ENCODE measurements at regions of chr6 and their contacts with region 1.

Region 1: GRCh38 chr6:43263314-43264178 is 20.3 kb downstream of the TTBK1 start:
- DNase-seq: peak; percentile 49 to 90
- H3K4me3 ChIP-seq: no peak overlapping the region
- H3K27ac ChIP-seq: no peak overlapping the region
- H3K4me1 ChIP-seq: peaks cover 0 to 15% (median 5%) of the 10 kb centered on the region in 4 experiments; a peak in 6 of 7 replicates
- H3K27me3 ChIP-seq: peaks cover 2 to 9% (median 7%) of the 10 kb centered on the region in 4 experiments
- CTCF ChIP-seq: peak in 2 of 3 experiments; percentile 91 to 98; a peak in 3 of 4 replicates
- EP300 ChIP-seq: no peak
- POLR2A ChIP-seq: no peak
- RAD21 ChIP-seq: peak; percentile 96 to 97

Region 2: GRCh38 chr6:43150051-43150751 is 113.3 kb before region 1 on chr6:
- CTCF ChIA-PET with region 1: no interaction called
- POLR2A ChIA-PET with region 1: no interaction called
- DNase-seq: no peak
- H3K4me3 ChIP-seq: no peak overlapping the region
- H3K27ac ChIP-seq: no peak overlapping the region
- H3K4me1 ChIP-seq: no peaks in the 10 kb centered on the region
- H3K27me3 ChIP-seq: no peaks in the 10 kb centered on the region
- CTCF ChIP-seq: no peak
- EP300 ChIP-seq: no peak
- POLR2A ChIP-seq: no peak
- RAD21 ChIP-seq: no peak

Region 3: GRCh38 chr6:43274916-43275597 is 11.5 kb after region 1 on chr6:
- CTCF ChIA-PET with region 1: interaction called, 20 read pairs
- POLR2A ChIA-PET with region 1: interaction called, 5 read pairs
- DNase-seq: no peak
- H3K4me3 ChIP-seq: peak overlapping the region; percentile 28 to 66 (median 46)
- H3K27ac ChIP-seq: no peak overlapping the region
- H3K4me1 ChIP-seq: peaks cover 4 to 34% (median 26%) of the 10 kb centered on the region in 4 experiments
- H3K27me3 ChIP-seq: peaks cover 12 to 48% (median 37%) of the 10 kb centered on the region in 4 experiments
- CTCF ChIP-seq: no peak
- EP300 ChIP-seq: no peak
- POLR2A ChIP-seq: no peak
- RAD21 ChIP-seq: no peak

Region 4: DNA sequence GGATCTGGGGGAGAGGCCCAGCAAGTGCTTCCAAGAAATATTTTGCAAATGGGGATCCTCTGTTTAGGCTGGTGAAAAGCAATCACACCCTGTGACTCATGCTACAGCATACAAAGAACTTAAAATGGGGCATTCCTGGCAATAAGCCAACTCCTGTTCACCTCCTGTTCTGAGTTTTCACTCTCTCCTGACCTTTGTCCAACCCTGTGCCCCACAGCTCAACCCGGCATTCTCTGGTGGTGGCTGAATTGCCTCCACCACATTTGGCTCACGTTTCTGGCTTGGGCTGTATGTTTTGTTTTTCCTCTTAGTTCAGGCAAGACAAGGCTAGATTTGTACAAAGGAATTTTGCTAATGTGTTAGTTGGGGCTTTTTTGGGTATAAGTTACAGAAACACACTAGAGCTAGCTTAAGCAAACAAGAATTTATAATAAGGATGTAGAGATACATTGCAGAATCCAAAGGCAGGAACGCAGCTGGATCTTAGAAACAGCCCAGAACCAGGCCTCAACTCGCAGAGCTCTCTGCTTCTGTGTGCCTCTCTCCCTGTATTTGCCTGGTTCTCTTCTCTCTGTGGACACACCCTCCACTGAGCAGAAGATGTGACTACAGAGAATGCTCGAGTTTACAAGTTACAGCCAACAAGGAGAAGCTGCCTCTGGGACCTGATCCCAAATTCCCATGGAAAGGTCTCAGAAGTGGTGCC is 173.2 kb after region 1 on chr6:
- CTCF ChIA-PET with region 1: no interaction called
- POLR2A ChIA-PET with region 1: no interaction called
- DNase-seq: no peak
- H3K4me3 ChIP-seq: no peak overlapping the region
- H3K27ac ChIP-seq: no peak overlapping the region
- H3K4me1 ChIP-seq: no peaks in the 10 kb centered on the region; a peak in 2 of 7 replicates
- H3K27me3 ChIP-seq: no peaks in the 10 kb centered on the region
- CTCF ChIP-seq: no peak
- EP300 ChIP-seq: no peak
- POLR2A ChIP-seq: no peak
- RAD21 ChIP-seq: no peak

Measured in H1 (cell line).